ENCODE measurements at regions of chr16 and their contacts with region 1.

Region 1: GRCh38 chr16:21300309-21301167 is 22.4 kb upstream of the CRYM start:
- DNase-seq: peak; percentile 95

Region 2: GRCh38 chr16:21158208-21159110 is 142.1 kb before region 1 on chr16 and contains the start of gene LDAF1:
- intact Hi-C with region 1: loop called in 1 of 2 experiments (anchors 2 kb)
- DNase-seq: peak; percentile 96
- total RNA-seq, gene LDAF1: 39.8 to 49.6 TPM

Region 3: DNA sequence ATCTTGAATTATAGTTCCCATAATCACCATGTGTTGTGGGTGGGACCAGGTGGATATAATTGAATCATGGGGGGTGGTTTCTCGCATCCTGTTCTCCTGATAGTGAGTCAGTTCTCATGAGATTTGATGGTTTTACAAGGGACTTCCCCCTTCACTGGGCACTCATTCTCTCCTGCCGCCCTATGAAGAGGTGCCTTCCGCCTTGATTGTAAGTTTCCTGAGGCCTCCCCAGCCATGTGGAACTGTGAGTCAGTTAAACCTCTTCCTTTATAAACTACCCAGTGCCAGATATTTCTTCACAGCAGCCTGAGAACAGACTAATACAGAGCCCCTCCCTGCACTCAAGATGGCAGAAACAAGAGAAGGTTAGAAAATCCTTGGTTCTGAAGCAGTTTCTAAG is 115.7 kb before region 1 on chr16:
- intact Hi-C with region 1: loop called (anchors 5 to 10 kb)
- DNase-seq: no peak

Measured in posterior vena cava (tissue), 2 donors.